ENCODE measurements at regions of chr3 and their contacts with region 1.

Region 1: GRCh38 chr3:102536456-102536855 is 101.6 kb downstream of the ZPLD1 start:
- DNase-seq: peak in 1 of 2 experiments; percentile 37
- H3K4me3 ChIP-seq: no peak overlapping the region
- H3K4me1 ChIP-seq: no peaks in the 10 kb centered on the region
- H3K27me3 ChIP-seq: no peaks in the 10 kb centered on the region

Region 2: DNA sequence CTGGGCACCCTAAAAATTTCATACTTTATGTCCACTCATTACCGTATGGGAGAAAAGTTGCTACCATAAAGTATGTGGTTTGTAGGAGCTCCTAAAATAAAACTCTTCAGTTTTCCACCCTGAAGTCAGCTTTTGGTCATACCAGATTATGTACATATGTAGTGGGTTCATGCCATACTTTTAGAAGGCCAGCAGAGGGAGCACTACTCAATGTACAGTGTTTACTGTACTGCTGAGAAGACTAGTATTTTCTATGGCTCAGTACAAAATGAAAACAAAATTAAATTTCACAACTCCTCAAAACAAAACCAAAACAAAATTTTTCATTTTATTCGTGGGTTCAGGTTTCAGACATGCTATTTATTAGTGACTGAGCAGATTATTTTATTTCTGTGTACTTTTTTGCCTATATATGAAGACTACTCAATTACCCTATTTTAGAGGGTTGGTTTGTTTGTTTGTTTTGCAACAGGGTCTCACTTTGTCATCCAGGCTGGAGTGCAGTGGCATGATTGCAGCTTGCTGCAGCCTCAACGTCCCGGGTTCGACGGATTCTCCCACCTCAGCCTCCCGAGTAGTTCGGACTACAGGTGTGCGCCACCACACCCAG is 733.2 kb before region 1 on chr3:
- in situ Hi-C with region 1: loop called (anchors 10 kb)
- DNase-seq: peak; percentile 69 to 70
- H3K4me3 ChIP-seq: no peak overlapping the region
- H3K4me1 ChIP-seq: no peaks in the 10 kb centered on the region
- H3K27me3 ChIP-seq: no peaks in the 10 kb centered on the region

Region 3: GRCh38 chr3:102229062-102229655 is 307.3 kb before region 1 on chr3:
- in situ Hi-C with region 1: loop called (anchors 10 kb)
- DNase-seq: peak; percentile 29 to 75
- H3K4me3 ChIP-seq: no peak overlapping the region
- H3K4me1 ChIP-seq: no peaks in the 10 kb centered on the region
- H3K27me3 ChIP-seq: peaks cover 10% of the 10 kb centered on the region

Region 4: GRCh38 chr3:102290241-102290640 is 246.2 kb before region 1 on chr3:
- in situ Hi-C with region 1: no loop called
- DNase-seq: no peak
- H3K4me3 ChIP-seq: no peak overlapping the region
- H3K4me1 ChIP-seq: no peaks in the 10 kb centered on the region
- H3K27me3 ChIP-seq: no peaks in the 10 kb centered on the region

Measured in HAP-1 (cell line).